ENCODE measurements at regions of chr4 and their contacts with region 1.

Region 1: GRCh38 chr4:96407738-96408231 is 567.9 kb downstream of the PDHA2 start:
- DNase-seq: no peak
- H3K4me3 ChIP-seq: no peak overlapping the region
- H3K27ac ChIP-seq: no peak overlapping the region
- H3K4me1 ChIP-seq: no peaks in the 10 kb centered on the region
- H3K27me3 ChIP-seq: no peaks in the 10 kb centered on the region
- CTCF ChIP-seq: no peak

Region 2: DNA sequence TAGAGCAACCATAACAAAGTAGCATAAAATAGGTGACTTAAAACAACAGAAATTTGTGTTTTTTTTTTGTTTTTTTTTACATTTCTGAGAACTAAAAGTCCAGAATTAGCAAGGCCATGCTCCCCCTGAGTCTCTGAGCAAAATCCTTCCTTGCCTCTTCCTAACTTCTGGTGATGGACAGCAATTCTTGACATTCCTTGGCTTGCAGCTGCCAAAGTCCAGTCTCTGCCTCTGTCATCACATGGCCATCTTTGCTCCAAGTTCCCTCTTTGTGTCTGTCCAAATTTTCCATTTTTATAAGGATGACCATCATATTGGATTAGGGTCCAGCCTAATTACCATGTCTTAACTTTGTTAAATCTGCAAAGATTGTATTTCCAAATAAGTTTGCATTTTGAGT is 160.7 kb before region 1 on chr4:
- intact Hi-C with region 1: loop called (anchors 5 kb)
- DNase-seq: no peak
- H3K4me3 ChIP-seq: no peak overlapping the region
- H3K27ac ChIP-seq: no peak overlapping the region
- H3K4me1 ChIP-seq: no peaks in the 10 kb centered on the region
- H3K27me3 ChIP-seq: no peaks in the 10 kb centered on the region
- CTCF ChIP-seq: no peak

Region 3: GRCh38 chr4:96448315-96448872 is 40.6 kb after region 1 on chr4:
- intact Hi-C with region 1: no loop called
- DNase-seq: no peak
- H3K4me3 ChIP-seq: no peak overlapping the region
- H3K27ac ChIP-seq: no peak overlapping the region
- H3K4me1 ChIP-seq: no peaks in the 10 kb centered on the region
- H3K27me3 ChIP-seq: no peaks in the 10 kb centered on the region
- CTCF ChIP-seq: no peak